CD4-positive, alpha-beta T cell (primary cell): ENCODE measurements at regions of chr1 and their contacts with region 1.

Region 1: DNA sequence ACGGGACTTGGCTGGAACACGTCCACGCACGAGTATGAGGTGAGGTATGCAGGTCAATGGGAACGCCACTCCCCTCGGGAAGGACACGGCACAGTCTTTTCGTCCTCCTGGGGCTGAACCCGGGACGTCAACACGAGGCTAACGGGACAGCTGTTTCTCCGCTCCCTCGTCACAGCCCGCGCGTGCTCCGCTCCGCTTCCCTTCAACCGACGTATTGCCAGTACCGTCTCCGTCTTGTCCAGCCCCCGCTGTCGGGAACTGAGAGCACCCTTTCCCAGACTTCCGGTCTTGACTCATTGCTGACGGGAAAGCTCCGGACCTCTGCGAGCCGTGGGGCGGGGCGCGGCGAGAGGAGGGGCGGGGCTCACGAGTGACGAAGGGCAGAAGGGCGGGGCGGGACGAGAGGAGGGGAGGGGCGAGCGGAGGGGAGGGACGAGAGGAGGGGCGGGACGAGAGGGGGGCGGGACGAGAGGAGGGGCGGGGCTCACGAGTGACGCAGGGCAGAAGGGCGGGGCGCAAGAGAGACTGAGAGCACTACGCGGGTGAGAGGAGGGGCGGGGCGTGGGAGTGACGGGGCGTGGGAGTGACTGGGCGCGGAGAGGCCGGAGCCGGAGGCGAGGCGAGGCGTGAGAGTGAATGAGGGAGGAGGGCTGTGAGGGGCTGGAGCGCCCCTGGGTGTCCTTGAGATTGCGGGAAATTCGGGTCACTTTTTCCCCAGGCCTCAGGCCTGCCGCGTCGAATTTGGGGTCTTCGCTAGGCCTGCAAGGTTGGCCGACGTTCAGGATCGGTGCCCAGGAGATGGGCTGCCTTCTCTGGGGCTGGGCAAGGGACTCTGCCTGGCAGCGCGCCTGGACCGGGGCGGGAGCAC is 22.2 kb upstream of the CFAP126 start:
- DNase-seq: peak; percentile 90 to 98 (median 96)
- ATAC-seq: peak; percentile 86
- H3K4me3 ChIP-seq: peak overlapping the region; percentile 92
- H3K4me3 Mint-ChIP-seq: peak overlapping the region; percentile 92
- H3K27ac ChIP-seq: peak overlapping the region; percentile 70 to 90
- H3K27ac Mint-ChIP-seq: peak overlapping the region; percentile 97
- H3K4me1 ChIP-seq: peaks cover 25% of the 10 kb centered on the region
- H3K4me1 Mint-ChIP-seq: peaks cover 45% of the 10 kb centered on the region
- H3K27me3 ChIP-seq: no peaks in the 10 kb centered on the region
- H3K27me3 Mint-ChIP-seq: no peaks in the 10 kb centered on the region
- CTCF ChIP-seq: no peak

Region 2: GRCh38 chr1:161177112-161177935 is 212.6 kb before region 1 on chr1 and contains the start of gene B4GALT3:
- CTCF ChIA-PET with region 1: no interaction called
- POLR2A ChIA-PET with region 1: interaction called, 3 read pairs
- intact Hi-C with region 1: loop called in 1 of 2 experiments (anchors 5 kb)
- DNase-seq: peak; percentile 84 to 98 (median 93)
- ATAC-seq: peak; percentile 90
- H3K4me3 ChIP-seq: peak within 1 kb of the TSS; percentile 77
- H3K4me3 Mint-ChIP-seq: peak within 1 kb of the TSS; percentile 100
- H3K27ac ChIP-seq: peak within 1 kb of the TSS; percentile 82 to 89
- H3K27ac Mint-ChIP-seq: peak within 1 kb of the TSS; percentile 97
- H3K4me1 ChIP-seq: peaks cover 76% of the 10 kb centered on the region
- H3K4me1 Mint-ChIP-seq: peaks cover 72% of the 10 kb centered on the region
- H3K27me3 ChIP-seq: no peaks in the 10 kb centered on the region
- H3K27me3 Mint-ChIP-seq: no peaks in the 10 kb centered on the region
- CTCF ChIP-seq: no peak
- total RNA-seq, gene B4GALT3: 40.8 to 44.3 TPM

Region 3: DNA sequence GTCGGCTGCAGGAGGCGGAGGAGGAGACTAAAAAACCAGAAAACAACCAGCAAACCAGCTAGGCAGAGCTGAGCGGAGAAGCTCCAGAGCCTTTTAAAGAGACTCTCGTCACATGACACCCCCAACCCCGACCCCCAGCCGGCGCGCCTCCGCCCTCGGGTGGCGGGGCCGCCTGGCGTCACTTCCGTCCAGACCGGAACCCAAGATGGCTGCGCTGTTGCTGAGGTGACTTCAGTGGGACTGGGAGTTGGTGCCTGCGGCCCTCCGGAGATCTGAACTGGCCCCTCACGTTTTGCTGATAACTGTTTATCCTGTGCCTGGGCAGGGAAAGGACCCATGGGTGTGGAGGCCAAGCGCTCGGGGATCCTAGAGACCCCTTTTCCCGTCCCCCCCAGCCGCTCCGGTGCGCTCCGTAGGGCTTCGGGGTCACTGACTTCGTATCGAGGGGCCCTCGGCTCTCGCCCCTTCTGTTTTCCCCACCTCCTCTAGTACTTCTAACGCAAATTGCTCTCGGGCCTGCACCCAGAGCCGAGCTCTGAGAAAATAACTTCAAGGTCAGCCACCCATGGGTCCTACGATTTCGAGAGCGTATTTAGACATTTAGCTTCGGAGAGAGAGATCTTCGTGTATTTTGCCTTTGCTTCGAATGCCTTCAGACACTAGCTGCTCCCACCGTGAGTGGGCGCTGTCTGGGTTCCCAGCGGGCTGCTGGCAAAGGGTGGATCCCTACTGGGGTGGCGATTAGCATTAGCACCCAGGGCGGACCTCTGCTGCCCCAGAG is 75.5 kb before region 1 on chr1 and contains the start of gene SDHC:
- CTCF ChIA-PET with region 1: no interaction called
- POLR2A ChIA-PET with region 1: interaction called, 12 read pairs
- intact Hi-C with region 1: loop called in 1 of 2 experiments (anchors 5 kb)
- DNase-seq: peak; percentile 84 to 96 (median 90)
- ATAC-seq: peak; percentile 98
- H3K4me3 ChIP-seq: peak within 1 kb of the TSS; percentile 90
- H3K4me3 Mint-ChIP-seq: peak within 1 kb of the TSS; percentile 98
- H3K27ac ChIP-seq: peak within 1 kb of the TSS; percentile 94 to 97
- H3K27ac Mint-ChIP-seq: peak within 1 kb of the TSS; percentile 100
- H3K4me1 ChIP-seq: peaks cover 18% of the 10 kb centered on the region
- H3K4me1 Mint-ChIP-seq: peaks cover 30% of the 10 kb centered on the region
- H3K27me3 ChIP-seq: no peaks in the 10 kb centered on the region
- H3K27me3 Mint-ChIP-seq: no peaks in the 10 kb centered on the region
- CTCF ChIP-seq: no peak
- total RNA-seq, gene SDHC: 33.0 to 37.2 TPM

Region 4: DNA sequence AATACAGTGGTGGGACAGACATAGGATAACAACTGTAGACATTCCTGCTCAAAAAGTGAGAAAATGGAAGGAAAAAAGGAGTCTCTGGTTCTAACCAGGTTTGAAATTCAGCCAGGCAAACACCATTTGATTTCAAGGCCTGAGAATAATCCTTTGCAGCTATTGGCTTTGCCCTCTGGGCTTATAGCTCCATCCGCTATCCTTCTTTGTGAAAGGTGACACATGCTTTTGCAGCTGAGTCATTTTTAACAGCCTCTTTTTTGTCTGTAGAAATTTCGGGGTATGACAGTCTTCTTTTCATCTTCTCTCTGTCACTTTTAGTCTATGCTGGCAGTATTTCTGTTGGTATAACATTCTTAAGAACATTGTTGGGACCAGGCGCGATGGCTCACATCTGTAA is 59.6 kb before region 1 on chr1:
- CTCF ChIA-PET with region 1: no interaction called
- POLR2A ChIA-PET with region 1: no interaction called
- intact Hi-C with region 1: no loop called
- DNase-seq: no peak
- ATAC-seq: no peak
- H3K4me3 ChIP-seq: no peak overlapping the region
- H3K4me3 Mint-ChIP-seq: no peak overlapping the region
- H3K27ac ChIP-seq: no peak overlapping the region
- H3K27ac Mint-ChIP-seq: no peak overlapping the region
- H3K4me1 ChIP-seq: no peaks in the 10 kb centered on the region
- H3K4me1 Mint-ChIP-seq: no peaks in the 10 kb centered on the region
- H3K27me3 ChIP-seq: no peaks in the 10 kb centered on the region
- H3K27me3 Mint-ChIP-seq: no peaks in the 10 kb centered on the region
- CTCF ChIP-seq: no peak